Tibial artery (tissue), 4 donors: ENCODE measurements at regions of chr3 and their contacts with region 1.

Region 1: DNA sequence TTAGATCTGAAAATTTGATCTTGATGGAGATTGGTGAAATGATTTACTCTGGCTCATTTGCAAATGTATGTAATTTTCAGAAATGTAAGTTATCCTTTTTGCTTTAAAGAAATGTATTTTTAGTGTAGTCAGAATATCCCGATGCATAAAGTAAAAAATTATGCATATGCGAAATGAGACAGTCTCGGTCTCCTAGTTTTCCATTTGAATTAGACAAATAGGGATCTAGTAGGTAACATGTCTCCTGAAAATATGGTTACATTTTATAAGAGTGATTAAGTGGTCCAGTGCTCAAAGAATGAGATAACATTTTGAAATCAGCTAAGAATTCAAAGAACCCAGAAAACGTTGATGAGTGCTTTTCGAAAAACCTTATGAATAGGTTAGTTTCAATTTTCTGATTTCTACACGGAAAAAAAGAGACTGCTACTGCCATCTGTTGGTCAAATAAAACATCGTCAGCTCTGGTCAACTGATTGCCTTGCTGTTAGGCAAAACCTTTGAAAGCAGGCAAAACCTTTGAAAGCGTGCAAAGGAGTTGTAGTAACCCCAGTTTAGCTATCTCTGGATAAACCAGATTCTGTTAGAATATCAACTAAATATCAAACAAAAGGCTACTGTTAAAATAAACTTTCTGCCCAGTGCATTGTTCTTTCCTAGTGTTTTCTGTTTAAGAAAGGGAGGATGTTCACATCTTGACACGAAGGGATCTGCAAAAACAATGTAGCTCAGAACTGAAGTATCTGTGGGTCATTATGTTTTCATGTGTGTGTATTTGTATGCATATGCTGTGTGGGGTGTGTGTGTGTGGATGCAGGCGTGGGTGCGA is 59.3 kb upstream of the CHMP2B start:
- DNase-seq: no peak
- H3K4me3 ChIP-seq: peak overlapping the region; percentile 25 to 27
- H3K27ac ChIP-seq: no peak overlapping the region
- H3K4me1 ChIP-seq: peaks cover 0 to 5% (median 0%) of the 10 kb centered on the region in 4 donors
- H3K27me3 ChIP-seq: no peaks in the 10 kb centered on the region
- CTCF ChIP-seq: peak; percentile 59 to 66

Region 2: DNA sequence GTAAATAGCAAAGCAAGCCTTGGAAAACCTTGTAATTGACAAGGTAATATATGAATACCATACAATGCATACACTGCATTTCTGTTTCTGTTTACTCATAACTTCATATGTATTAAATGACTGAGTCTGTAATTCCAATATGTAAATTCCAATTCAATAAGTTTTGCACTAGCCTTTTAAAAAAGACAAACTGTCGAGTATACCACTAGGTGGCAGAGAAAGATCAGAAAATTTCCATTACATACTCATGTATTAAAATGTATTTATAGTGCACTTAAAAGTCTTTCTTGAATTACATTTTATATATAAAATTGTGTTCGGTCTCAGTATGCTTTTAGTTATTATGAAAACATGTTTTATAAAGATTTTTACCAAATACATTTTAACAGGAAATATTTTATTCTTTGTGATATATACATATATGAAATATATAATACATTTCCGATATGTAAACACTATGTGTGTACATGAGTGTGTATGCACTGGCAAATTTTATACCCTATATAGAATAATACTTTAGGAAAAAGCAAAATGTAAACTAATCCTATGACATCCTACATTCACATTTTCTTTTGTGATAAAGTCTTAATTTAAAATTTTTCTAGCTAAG is 393.7 kb before region 1 on chr3:
- intact Hi-C with region 1: loop called (anchors 5 kb)
- DNase-seq: no peak
- H3K4me3 ChIP-seq: no peak overlapping the region
- H3K27ac ChIP-seq: no peak overlapping the region
- H3K4me1 ChIP-seq: no peaks in the 10 kb centered on the region
- H3K27me3 ChIP-seq: no peaks in the 10 kb centered on the region
- CTCF ChIP-seq: peak; percentile 47 to 56

Region 3: DNA sequence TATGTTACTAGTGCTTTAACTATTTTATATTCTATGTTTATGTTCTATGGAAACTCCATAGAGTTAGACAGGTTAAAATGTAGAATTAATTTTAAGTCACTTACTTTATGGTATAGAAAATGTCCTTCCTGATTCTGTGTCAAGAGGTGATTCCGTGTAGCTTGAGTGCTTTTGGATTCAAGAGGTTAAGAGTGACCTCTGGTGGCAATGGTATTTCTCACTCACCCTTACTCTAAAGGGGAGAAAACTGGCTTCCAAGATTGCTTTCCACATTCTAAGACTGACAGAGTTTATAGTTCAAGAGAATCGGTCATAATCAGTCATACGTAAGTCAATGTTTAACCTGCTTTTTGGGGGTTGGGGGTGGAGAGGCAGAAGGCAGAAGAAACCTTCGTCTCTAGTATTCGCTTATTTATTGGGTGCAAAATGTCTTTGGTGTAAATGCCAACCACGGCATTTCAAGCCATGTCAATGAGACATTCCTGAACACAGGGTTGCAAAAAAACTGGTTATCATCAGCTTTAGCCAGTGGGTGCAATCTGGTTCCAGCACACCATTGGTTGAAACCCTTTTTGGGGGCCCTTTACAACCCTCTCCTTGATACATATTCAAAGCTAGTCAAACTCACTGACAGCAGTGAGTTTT is 84.9 kb before region 1 on chr3:
- intact Hi-C with region 1: loop called (anchors 10 kb)
- DNase-seq: no peak
- H3K4me3 ChIP-seq: no peak overlapping the region
- H3K27ac ChIP-seq: no peak overlapping the region
- H3K4me1 ChIP-seq: no peaks in the 10 kb centered on the region
- H3K27me3 ChIP-seq: no peaks in the 10 kb centered on the region
- CTCF ChIP-seq: peak; percentile 70 to 75